ENCODE measurements at regions of chr3 and their contacts with region 1.

Region 1: GRCh38 chr3:113019182-113020137 is 28.7 kb downstream of the GTPBP8 start:
- DNase-seq: peak; percentile 96
- ATAC-seq: peak; percentile 90
- H3K4me3 Mint-ChIP-seq: peak overlapping the region; percentile 85
- H3K27ac Mint-ChIP-seq: peak overlapping the region; percentile 94
- H3K4me1 Mint-ChIP-seq: peaks cover 55% of the 10 kb centered on the region
- H3K27me3 Mint-ChIP-seq: no peaks in the 10 kb centered on the region

Region 2: DNA sequence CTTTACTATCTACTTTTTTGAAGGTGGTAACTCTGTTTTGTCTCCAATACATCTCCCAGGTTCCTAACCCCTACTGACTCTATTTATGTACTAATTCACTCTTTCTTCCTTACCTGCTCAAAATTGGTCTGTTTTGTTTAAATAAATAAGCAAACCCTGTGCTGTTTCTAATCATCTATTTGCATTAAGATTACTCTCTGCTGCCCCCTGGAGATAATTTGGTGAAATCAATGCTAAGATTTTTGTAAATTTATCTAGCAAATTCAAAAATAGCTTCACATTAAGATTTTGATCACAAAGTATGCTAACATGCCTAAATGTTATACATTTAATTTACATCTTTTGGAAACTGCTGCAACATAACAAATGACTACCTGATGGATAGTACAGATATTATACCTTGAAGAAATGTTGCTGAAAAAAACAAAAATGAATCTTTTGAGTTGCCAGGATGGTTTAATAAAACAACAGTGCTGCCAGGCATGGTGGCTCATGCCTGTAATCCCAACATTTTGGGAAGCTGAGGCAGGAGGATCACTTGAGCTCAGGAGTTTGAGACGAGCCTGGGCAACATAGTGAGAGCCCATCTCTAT is 40.1 kb before region 1 on chr3:
- CTCF ChIA-PET with region 1: interaction called, 14 read pairs
- POLR2A ChIA-PET with region 1: interaction called, 3 read pairs
- intact Hi-C with region 1: no loop called
- DNase-seq: no peak
- ATAC-seq: no peak
- H3K4me3 Mint-ChIP-seq: no peak overlapping the region
- H3K27ac Mint-ChIP-seq: no peak overlapping the region
- H3K4me1 Mint-ChIP-seq: peaks cover 73% of the 10 kb centered on the region
- H3K27me3 Mint-ChIP-seq: no peaks in the 10 kb centered on the region

Region 3: GRCh38 chr3:112990672-112991602 is 28.5 kb before region 1 on chr3 and contains the start of gene GTPBP8:
- CTCF ChIA-PET with region 1: interaction called, 11 read pairs
- POLR2A ChIA-PET with region 1: interaction called, 9 read pairs
- intact Hi-C with region 1: loop called (anchors 1 kb)
- DNase-seq: peak; percentile 95
- ATAC-seq: peak; percentile 96
- H3K4me3 Mint-ChIP-seq: peak within 1 kb of the TSS; percentile 81
- H3K27ac Mint-ChIP-seq: peak within 1 kb of the TSS; percentile 94
- H3K4me1 Mint-ChIP-seq: peaks cover 70% of the 10 kb centered on the region
- H3K27me3 Mint-ChIP-seq: no peaks in the 10 kb centered on the region
- total RNA-seq, gene GTPBP8: 34.3 to 43.0 TPM

Region 4: GRCh38 chr3:113002679-113003078 is 16.8 kb before region 1 on chr3:
- CTCF ChIA-PET with region 1: interaction called, 16 read pairs
- POLR2A ChIA-PET with region 1: interaction called, 21 read pairs
- intact Hi-C with region 1: loop called (anchors 1 kb)
- DNase-seq: peak; percentile 77
- ATAC-seq: peak; percentile 77
- H3K4me3 Mint-ChIP-seq: no peak overlapping the region
- H3K27ac Mint-ChIP-seq: peak overlapping the region; percentile 89
- H3K4me1 Mint-ChIP-seq: peaks cover 83% of the 10 kb centered on the region
- H3K27me3 Mint-ChIP-seq: no peaks in the 10 kb centered on the region

Region 5: DNA sequence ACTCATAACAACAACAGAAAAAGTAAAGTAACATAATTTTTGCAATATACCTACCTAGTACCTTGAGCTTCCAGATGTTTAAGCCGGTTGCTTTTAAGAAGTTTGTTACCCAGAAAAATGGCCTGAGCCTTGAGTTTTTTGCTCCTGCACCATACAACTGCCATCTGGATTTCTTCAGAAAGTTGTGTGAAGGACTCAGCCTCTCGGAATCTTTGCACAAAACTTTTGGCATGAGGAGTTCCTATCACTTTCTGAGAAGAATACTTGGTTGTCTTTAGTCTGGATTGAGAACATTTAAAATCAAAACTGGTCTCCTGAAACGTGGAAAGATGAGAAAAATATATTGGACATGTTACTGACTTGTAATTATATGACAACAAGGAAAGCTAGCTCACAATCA is 11.3 kb before region 1 on chr3:
- CTCF ChIA-PET with region 1: interaction called, 16 read pairs
- POLR2A ChIA-PET with region 1: interaction called, 21 read pairs
- intact Hi-C with region 1: loop called (anchors 1 kb)
- DNase-seq: no peak
- ATAC-seq: no peak
- H3K4me3 Mint-ChIP-seq: no peak overlapping the region
- H3K27ac Mint-ChIP-seq: peak overlapping the region; percentile 15
- H3K4me1 Mint-ChIP-seq: peaks cover 92% of the 10 kb centered on the region
- H3K27me3 Mint-ChIP-seq: no peaks in the 10 kb centered on the region

Region 6: DNA sequence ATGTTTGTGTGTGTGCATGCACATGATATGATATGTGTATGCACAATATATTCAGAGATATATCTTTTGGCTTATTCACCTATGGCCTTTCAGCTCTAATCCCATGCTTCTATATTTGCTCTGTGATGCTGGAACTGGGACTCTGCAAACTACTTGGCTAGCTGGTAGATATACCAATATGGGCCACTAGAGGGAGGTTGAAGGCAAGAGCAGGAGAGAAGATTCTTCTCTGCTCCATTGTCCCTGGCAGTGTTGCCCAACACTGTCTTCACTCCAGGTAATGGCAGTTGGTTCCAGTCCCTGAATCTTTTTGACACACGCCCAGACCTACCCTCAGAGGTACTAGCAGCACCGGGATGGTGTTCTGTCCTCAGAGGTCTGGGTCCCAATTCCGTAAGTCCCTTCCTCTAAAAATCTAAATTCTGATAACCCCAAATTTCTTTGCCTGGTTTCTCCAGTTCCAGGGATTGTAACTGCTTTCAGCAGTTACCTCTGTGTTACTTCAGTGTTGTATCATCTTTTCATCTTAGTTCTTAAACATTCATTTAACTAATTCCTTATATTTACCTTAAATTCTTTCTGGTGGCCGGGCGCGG is 16.0 kb after region 1 on chr3:
- CTCF ChIA-PET with region 1: interaction called, 32 read pairs
- POLR2A ChIA-PET with region 1: no interaction called
- intact Hi-C with region 1: no loop called
- DNase-seq: peak; percentile 31
- ATAC-seq: peak; percentile 73
- H3K4me3 Mint-ChIP-seq: no peak overlapping the region
- H3K27ac Mint-ChIP-seq: no peak overlapping the region
- H3K4me1 Mint-ChIP-seq: no peaks in the 10 kb centered on the region
- H3K27me3 Mint-ChIP-seq: no peaks in the 10 kb centered on the region

Region 7: GRCh38 chr3:113485161-113485609 is 465.7 kb after region 1 on chr3:
- CTCF ChIA-PET with region 1: no interaction called
- POLR2A ChIA-PET with region 1: no interaction called
- intact Hi-C with region 1: no loop called
- DNase-seq: peak; percentile 24
- ATAC-seq: peak; percentile 30
- H3K4me3 Mint-ChIP-seq: no peak overlapping the region
- H3K27ac Mint-ChIP-seq: no peak overlapping the region
- H3K4me1 Mint-ChIP-seq: peaks cover 10% of the 10 kb centered on the region
- H3K27me3 Mint-ChIP-seq: no peaks in the 10 kb centered on the region

Region 8: DNA sequence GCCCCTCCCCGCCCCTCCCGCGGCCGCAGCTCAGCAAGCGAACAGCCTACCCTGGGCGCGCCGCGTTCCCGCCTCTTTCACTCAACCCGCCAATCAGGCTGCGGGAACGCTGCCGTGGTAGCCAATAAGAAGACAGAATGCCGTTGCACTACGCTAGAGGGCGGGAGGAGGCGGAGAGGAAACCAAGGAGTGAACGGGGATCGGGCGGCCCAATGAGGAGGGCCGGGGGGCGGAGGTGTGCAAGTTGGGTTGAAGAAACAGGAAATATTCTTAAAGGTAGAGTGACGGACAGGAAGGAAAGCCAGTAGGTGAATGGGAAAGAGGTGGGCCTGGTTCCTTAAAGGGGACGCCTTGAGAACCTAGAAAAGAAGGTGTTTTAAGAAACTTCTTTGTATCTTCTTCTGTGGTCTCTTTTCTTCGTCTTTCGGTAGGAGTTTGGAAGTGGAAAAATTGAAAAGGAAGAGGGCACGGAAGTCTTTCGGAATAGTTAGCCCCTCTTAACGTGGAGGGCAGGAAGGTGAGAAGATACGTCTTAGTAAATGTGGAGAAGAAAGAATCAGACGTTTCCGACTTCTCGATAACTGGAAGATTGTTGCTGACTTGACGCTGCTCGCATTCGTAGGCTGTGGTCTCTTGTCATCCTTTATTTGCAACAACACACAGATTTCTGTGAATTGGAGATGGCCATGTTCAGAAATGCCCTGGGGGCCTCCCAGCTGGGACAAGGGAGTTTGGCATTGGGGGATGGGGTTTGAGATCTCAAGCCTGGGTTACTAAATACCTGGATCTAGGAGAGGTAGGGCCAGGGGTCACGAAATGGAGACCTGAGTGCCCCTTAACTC is 677.4 kb after region 1 on chr3:
- CTCF ChIA-PET with region 1: interaction called, 4 read pairs
- POLR2A ChIA-PET with region 1: no interaction called
- intact Hi-C with region 1: loop called (anchors 2 to 5 kb)
- DNase-seq: peak; percentile 99
- ATAC-seq: peak; percentile 92
- H3K4me3 Mint-ChIP-seq: no peak overlapping the region
- H3K27ac Mint-ChIP-seq: no peak overlapping the region
- H3K4me1 Mint-ChIP-seq: peaks cover 27% of the 10 kb centered on the region
- H3K27me3 Mint-ChIP-seq: no peaks in the 10 kb centered on the region

Region 9: GRCh38 chr3:114192136-114192535 is 1172.7 kb after region 1 on chr3:
- CTCF ChIA-PET with region 1: no interaction called
- POLR2A ChIA-PET with region 1: no interaction called
- intact Hi-C with region 1: no loop called
- DNase-seq: no peak
- ATAC-seq: no peak
- H3K4me3 Mint-ChIP-seq: no peak overlapping the region
- H3K27ac Mint-ChIP-seq: no peak overlapping the region
- H3K4me1 Mint-ChIP-seq: peaks cover 7% of the 10 kb centered on the region
- H3K27me3 Mint-ChIP-seq: no peaks in the 10 kb centered on the region